Ascending aorta (tissue), 2 donors: ENCODE measurements at regions of chr17 and their contacts with region 1.

Region 1: DNA sequence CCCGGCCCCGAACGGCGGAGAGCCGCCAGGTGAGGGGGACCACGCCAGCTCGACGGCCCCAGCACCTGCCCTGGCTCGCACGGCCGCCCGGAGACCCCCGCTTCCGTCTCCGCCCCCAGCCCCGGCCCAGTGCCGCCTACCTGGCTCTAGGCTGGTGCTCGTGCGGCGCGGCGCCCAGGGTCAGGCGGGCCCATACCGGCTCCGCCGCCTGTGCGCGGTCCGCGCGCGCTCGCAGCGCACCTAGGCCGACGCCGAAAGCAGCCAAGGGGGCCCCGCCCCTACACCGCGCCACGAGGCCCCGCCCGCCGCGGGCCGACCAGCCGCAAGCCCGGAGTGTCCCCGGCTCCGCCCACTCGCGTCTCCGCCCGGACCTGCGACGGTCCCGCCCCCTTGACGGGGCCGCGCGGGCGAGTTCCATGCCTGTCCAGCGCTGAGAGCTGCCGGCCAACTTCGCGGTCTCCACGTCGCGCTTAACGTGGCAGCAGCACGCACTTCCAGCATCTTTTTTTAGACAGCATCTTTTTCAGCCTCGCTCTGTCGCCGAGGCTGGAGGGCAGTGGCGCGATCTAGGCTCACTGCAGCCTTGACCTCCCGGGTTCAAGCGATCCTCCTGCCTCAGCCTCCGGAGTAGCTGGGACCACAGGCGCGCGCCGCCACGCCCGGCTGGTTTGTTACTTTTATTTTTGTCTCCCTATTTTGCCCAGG is at the start of gene SLC25A39:
- DNase-seq: peak; percentile 67 to 97
- H3K4me3 ChIP-seq: peak within 1 kb of the TSS; percentile 74 to 88
- H3K27ac ChIP-seq: peak within 1 kb of the TSS; percentile 88 to 96
- H3K4me1 ChIP-seq: peaks cover 7 to 20% of the 10 kb centered on the region in 2 donors
- H3K27me3 ChIP-seq: no peaks in the 10 kb centered on the region
- CTCF ChIP-seq: no peak
- total RNA-seq, gene SLC25A39: 182 TPM

Region 2: GRCh38 chr17:43900183-43900857 is 424.4 kb before region 1 on chr17:
- intact Hi-C with region 1: loop called (anchors 10 kb)
- DNase-seq: peak in 1 of 2 donors; percentile 90
- H3K4me3 ChIP-seq: peak overlapping the region; percentile 47 to 63
- H3K27ac ChIP-seq: no peak overlapping the region
- H3K4me1 ChIP-seq: peaks cover 7 to 14% of the 10 kb centered on the region in 2 donors
- H3K27me3 ChIP-seq: no peaks in the 10 kb centered on the region
- CTCF ChIP-seq: no peak

Region 3: GRCh38 chr17:44070455-44071197 is 254.1 kb before region 1 on chr17 and contains the start of gene G6PC3:
- intact Hi-C with region 1: loop called (anchors 2 kb)
- DNase-seq: peak; percentile 83 to 98
- H3K4me3 ChIP-seq: peak within 1 kb of the TSS; percentile 66 to 68
- H3K27ac ChIP-seq: peak within 1 kb of the TSS; percentile 84 to 89
- H3K4me1 ChIP-seq: peaks cover 5 to 35% of the 10 kb centered on the region in 2 donors
- H3K27me3 ChIP-seq: no peaks in the 10 kb centered on the region
- CTCF ChIP-seq: peak in 1 of 3 experiments; percentile 14
- total RNA-seq, gene G6PC3: 111 TPM

Region 4: GRCh38 chr17:44199553-44200477 is 124.9 kb before region 1 on chr17 and contains the start of gene ATXN7L3:
- intact Hi-C with region 1: loop called (anchors 1 kb)
- DNase-seq: peak; percentile 94 to 99
- H3K4me3 ChIP-seq: peak within 1 kb of the TSS; percentile 98 to 99
- H3K27ac ChIP-seq: peak within 1 kb of the TSS; percentile 98 to 100
- H3K4me1 ChIP-seq: peaks cover 0 to 21% of the 10 kb centered on the region in 2 donors
- H3K27me3 ChIP-seq: no peaks in the 10 kb centered on the region
- CTCF ChIP-seq: no peak
- total RNA-seq, gene ATXN7L3: 62.8 TPM

Region 5: DNA sequence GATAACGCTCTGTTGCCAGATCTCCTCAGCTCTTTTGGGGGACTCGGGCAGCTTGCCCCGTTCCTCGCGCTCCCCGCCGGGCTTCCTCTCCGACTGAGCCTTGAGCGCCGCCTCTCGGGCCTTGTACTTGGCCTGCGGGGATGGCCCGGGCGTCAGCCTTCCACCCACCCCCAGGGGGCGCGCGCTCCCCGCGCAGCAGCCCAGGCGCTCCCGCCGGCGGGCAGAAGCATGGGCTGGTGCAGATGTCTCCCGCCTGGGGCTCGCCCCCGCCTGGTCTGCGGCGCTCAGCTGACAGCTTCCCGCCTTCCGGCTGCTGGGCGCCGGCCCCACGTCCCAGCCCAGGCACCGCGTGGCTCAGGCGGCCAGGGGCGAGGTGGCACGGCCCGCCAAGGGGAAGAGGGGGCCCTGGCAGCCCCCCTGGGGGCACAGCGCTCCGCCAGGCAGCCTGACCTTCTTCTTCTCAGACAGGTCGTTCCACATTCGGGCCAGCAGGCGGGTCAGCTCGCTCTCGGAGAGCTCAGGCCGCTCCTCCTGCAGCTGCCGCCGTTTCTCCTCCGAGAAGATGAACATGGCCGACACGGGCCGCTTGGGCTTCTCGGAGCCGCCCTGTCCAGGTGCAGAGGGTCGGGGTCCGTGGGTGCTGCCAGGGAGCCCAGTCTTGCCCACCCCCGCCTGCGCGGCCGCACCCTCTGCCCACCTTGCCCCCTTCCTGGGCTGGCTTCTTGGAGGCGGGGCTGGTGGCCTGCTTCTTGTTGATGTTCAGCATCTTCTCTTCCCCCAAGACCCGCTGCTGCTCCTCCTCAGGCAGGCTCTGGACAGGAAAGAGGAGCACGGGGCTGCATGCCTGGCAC is 114.2 kb before region 1 on chr17:
- intact Hi-C with region 1: loop called (anchors 2 kb)
- DNase-seq: peak; percentile 67 to 94
- H3K4me3 ChIP-seq: peak overlapping the region in 1 of 2 donors; percentile 14
- H3K27ac ChIP-seq: peak overlapping the region; percentile 29 to 65
- H3K4me1 ChIP-seq: peaks cover 0 to 9% of the 10 kb centered on the region in 2 donors
- H3K27me3 ChIP-seq: no peaks in the 10 kb centered on the region
- CTCF ChIP-seq: peak; percentile 98 to 100 (median 100)

Region 6: GRCh38 chr17:44218344-44219107 is 106.2 kb before region 1 on chr17:
- intact Hi-C with region 1: loop called (anchors 1 kb)
- DNase-seq: peak; percentile 45 to 92
- H3K4me3 ChIP-seq: peak overlapping the region; percentile 88 to 95
- H3K27ac ChIP-seq: peak overlapping the region; percentile 91 to 99
- H3K4me1 ChIP-seq: peaks cover 17 to 18% of the 10 kb centered on the region in 2 donors
- H3K27me3 ChIP-seq: no peaks in the 10 kb centered on the region
- CTCF ChIP-seq: peak in 2 of 3 experiments; percentile 79 to 82

Region 7: GRCh38 chr17:44344939-44345453 is 20.3 kb after region 1 on chr17 and contains the start of gene GRN:
- intact Hi-C with region 1: loop called (anchors 2 kb)
- DNase-seq: peak; percentile 89 to 98
- H3K4me3 ChIP-seq: peak within 1 kb of the TSS; percentile 79 to 89
- H3K27ac ChIP-seq: peak within 1 kb of the TSS; percentile 77 to 79
- H3K4me1 ChIP-seq: peaks cover 6 to 10% of the 10 kb centered on the region in 2 donors
- H3K27me3 ChIP-seq: no peaks in the 10 kb centered on the region
- CTCF ChIP-seq: no peak
- total RNA-seq, gene GRN: 430 TPM

Region 8: GRCh38 chr17:44565866-44566443 is 241.2 kb after region 1 on chr17:
- intact Hi-C with region 1: no loop called
- DNase-seq: no peak
- H3K4me3 ChIP-seq: no peak overlapping the region
- H3K27ac ChIP-seq: no peak overlapping the region
- H3K4me1 ChIP-seq: no peaks in the 10 kb centered on the region
- H3K27me3 ChIP-seq: no peaks in the 10 kb centered on the region
- CTCF ChIP-seq: no peak